ENCODE measurements at regions of chr7 and their contacts with region 1.

Region 1: GRCh38 chr7:98186452-98187137 is 24.6 kb upstream of the BHLHA15 start:
- DNase-seq: no peak
- ATAC-seq: no peak
- H3K4me3 Mint-ChIP-seq: no peak overlapping the region
- H3K27ac Mint-ChIP-seq: no peak overlapping the region
- H3K4me1 Mint-ChIP-seq: peaks cover 16% of the 10 kb centered on the region
- H3K27me3 Mint-ChIP-seq: no peaks in the 10 kb centered on the region
- CTCF ChIP-seq: no peak

Region 2: DNA sequence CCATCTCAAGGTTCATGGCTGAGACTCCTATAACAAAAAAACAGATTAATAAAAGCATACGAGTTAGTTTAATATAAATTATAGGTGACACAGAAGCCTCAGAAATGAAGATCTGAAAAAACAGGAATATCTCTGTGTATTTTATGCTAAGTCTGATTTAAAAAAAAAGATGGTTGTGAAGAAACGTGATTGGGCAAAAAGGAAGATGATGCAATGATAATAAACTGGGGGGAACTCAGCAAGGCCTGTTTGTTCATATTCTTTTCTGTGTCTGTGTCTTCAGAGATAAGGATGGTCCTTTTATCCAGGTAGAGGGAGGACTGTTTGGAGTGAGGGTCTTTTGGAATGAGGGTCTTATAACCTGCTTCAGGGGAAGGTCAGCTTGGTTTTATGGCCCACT is 428.8 kb before region 1 on chr7:
- CTCF ChIA-PET with region 1: no interaction called
- POLR2A ChIA-PET with region 1: interaction called, 10 read pairs
- DNase-seq: no peak
- ATAC-seq: no peak
- H3K4me3 Mint-ChIP-seq: no peak overlapping the region
- H3K27ac Mint-ChIP-seq: no peak overlapping the region
- H3K4me1 Mint-ChIP-seq: no peaks in the 10 kb centered on the region
- H3K27me3 Mint-ChIP-seq: no peaks in the 10 kb centered on the region; the same call in 1 of the 2 replicates
- CTCF ChIP-seq: no peak

Region 3: GRCh38 chr7:98266840-98267239 is 80.2 kb after region 1 on chr7:
- CTCF ChIA-PET with region 1: no interaction called
- POLR2A ChIA-PET with region 1: no interaction called
- DNase-seq: no peak
- ATAC-seq: no peak
- H3K4me3 Mint-ChIP-seq: no peak overlapping the region
- H3K27ac Mint-ChIP-seq: no peak overlapping the region
- H3K4me1 Mint-ChIP-seq: peaks cover 2% of the 10 kb centered on the region; the same call in 1 of the 2 replicates
- H3K27me3 Mint-ChIP-seq: no peaks in the 10 kb centered on the region
- CTCF ChIP-seq: no peak